Activated naive CD4-positive, alpha-beta T cell treated with anti-CD3 and anti-CD28 coated beads for 36 hours (primary cell): ENCODE measurements at regions of chr5 and their contacts with region 1.

Region 1: DNA sequence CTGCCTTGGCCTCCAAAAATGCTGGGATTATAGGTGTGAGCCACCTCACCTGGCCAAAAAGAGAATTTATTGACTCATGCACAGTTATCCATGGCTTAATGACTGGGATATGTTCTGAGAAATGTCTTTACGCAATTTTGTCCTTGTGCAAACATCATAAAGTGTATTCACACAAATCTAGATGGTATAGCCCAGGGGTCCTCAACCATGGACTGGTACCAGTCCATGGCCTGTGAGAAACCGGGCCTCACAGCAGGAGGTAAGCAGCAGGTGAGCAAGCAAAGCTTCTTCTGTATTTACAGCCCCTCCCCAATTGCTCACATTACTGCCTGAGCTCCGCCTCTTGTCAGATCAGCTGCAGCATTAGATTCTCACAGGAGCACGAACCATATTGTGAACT is 12.4 kb upstream of the SIL1 start:
- DNase-seq: no peak
- H3K4me3 Mint-ChIP-seq: no peak overlapping the region
- H3K27ac Mint-ChIP-seq: no peak overlapping the region
- H3K4me1 Mint-ChIP-seq: peaks cover 1% of the 10 kb centered on the region
- H3K27me3 Mint-ChIP-seq: no peaks in the 10 kb centered on the region

Region 2: GRCh38 chr5:139177809-139178588 is 32.6 kb before region 1 on chr5:
- CTCF ChIA-PET with region 1: interaction called, 3 read pairs
- intact Hi-C with region 1: loop called (anchors 1 kb)
- DNase-seq: no peak
- H3K4me3 Mint-ChIP-seq: no peak overlapping the region
- H3K27ac Mint-ChIP-seq: no peak overlapping the region
- H3K4me1 Mint-ChIP-seq: peaks cover 11% of the 10 kb centered on the region
- H3K27me3 Mint-ChIP-seq: no peaks in the 10 kb centered on the region

Region 3: GRCh38 chr5:139335811-139336210 is 125.2 kb after region 1 on chr5:
- CTCF ChIA-PET with region 1: no interaction called
- intact Hi-C with region 1: no loop called
- DNase-seq: peak; percentile 18
- H3K4me3 Mint-ChIP-seq: no peak overlapping the region
- H3K27ac Mint-ChIP-seq: peak overlapping the region; percentile 65
- H3K4me1 Mint-ChIP-seq: peaks cover 23% of the 10 kb centered on the region
- H3K27me3 Mint-ChIP-seq: no peaks in the 10 kb centered on the region